ENCODE measurements at regions of chrX and their contacts with region 1.

Region 1: DNA sequence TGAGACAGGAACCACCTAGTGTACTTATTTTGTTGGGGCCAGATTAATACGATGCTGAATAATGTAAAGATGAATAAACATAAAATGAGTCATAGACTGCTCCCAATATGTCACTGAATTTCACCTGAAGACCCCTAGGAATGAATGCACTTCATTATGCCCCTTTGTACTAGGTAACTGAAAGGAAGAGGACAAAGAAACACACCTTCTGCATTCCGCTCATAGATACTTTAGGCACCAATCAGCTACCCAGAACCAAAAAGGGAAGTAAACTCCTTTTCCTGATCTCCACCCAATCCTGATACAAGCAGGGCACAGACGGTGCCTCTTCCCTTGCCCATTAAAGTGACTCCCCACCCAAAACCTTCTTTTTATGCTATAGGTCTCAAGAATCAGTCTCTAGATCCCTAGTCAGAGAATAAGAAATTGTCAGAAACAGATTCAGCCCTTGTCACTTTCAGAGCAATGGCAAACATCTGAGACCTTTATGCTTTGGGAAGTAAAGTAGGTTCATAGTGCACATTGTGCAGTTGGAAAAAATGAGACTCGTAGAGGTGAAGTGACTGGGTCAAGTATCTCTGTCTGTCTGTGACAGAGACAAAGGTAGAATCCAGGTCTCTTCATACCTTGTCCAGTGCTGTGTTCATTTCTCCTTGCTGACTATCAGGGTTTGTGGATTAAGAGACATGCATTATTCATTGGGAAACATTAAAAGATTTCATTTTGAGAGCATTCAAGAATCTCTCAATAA is 2.3 kb downstream of the GPR174 start:
- DNase-seq: peak; percentile 57
- ATAC-seq: peak; percentile 56
- H3K4me3 ChIP-seq: peak overlapping the region; percentile 54 to 85 (median 64)
- H3K4me3 Mint-ChIP-seq: peak overlapping the region; percentile 95
- H3K27ac ChIP-seq: peak overlapping the region; percentile 69 to 78
- H3K27ac Mint-ChIP-seq: peak overlapping the region; percentile 93
- H3K4me1 ChIP-seq: peaks cover 40 to 43% of the 10 kb centered on the region in 2 donors
- H3K4me1 Mint-ChIP-seq: peaks cover 60% of the 10 kb centered on the region
- H3K27me3 ChIP-seq: no peaks in the 10 kb centered on the region
- H3K27me3 Mint-ChIP-seq: no peaks in the 10 kb centered on the region
- CTCF ChIP-seq: no peak

Region 2: GRCh38 chrX:78321809-78322208 is 825.0 kb before region 1 on chrX:
- CTCF ChIA-PET with region 1: no interaction called
- POLR2A ChIA-PET with region 1: no interaction called
- intact Hi-C with region 1: loop called (anchors 10 kb)
- DNase-seq: peak; percentile 81
- ATAC-seq: peak; percentile 97
- H3K4me3 ChIP-seq: peak overlapping the region in 1 of 5 experiments; percentile 38
- H3K4me3 Mint-ChIP-seq: peak overlapping the region; percentile 73
- H3K27ac ChIP-seq: peak overlapping the region in 1 of 2 donors; percentile 74
- H3K27ac Mint-ChIP-seq: peak overlapping the region; percentile 77
- H3K4me1 ChIP-seq: peaks cover 41 to 45% of the 10 kb centered on the region in 2 donors
- H3K4me1 Mint-ChIP-seq: peaks cover 55% of the 10 kb centered on the region
- H3K27me3 ChIP-seq: no peaks in the 10 kb centered on the region
- H3K27me3 Mint-ChIP-seq: no peaks in the 10 kb centered on the region
- CTCF ChIP-seq: no peak

Region 3: GRCh38 chrX:78769946-78770345 is 376.9 kb before region 1 on chrX:
- CTCF ChIA-PET with region 1: no interaction called
- POLR2A ChIA-PET with region 1: no interaction called
- intact Hi-C with region 1: no loop called
- DNase-seq: no peak
- ATAC-seq: no peak
- H3K4me3 ChIP-seq: no peak overlapping the region
- H3K4me3 Mint-ChIP-seq: no peak overlapping the region
- H3K27ac ChIP-seq: no peak overlapping the region
- H3K27ac Mint-ChIP-seq: no peak overlapping the region
- H3K4me1 ChIP-seq: no peaks in the 10 kb centered on the region
- H3K4me1 Mint-ChIP-seq: no peaks in the 10 kb centered on the region
- H3K27me3 ChIP-seq: no peaks in the 10 kb centered on the region
- H3K27me3 Mint-ChIP-seq: no peaks in the 10 kb centered on the region
- CTCF ChIP-seq: no peak

Region 4: GRCh38 chrX:79081895-79082512 is 64.8 kb before region 1 on chrX:
- CTCF ChIA-PET with region 1: interaction called, 5 read pairs
- POLR2A ChIA-PET with region 1: no interaction called
- intact Hi-C with region 1: loop called (anchors 5 kb)
- DNase-seq: peak; percentile 69
- ATAC-seq: peak; percentile 78
- H3K4me3 ChIP-seq: peak overlapping the region in 2 of 5 experiments; percentile 12 to 26
- H3K4me3 Mint-ChIP-seq: peak overlapping the region; percentile 55
- H3K27ac ChIP-seq: peak overlapping the region in 1 of 2 donors; percentile 32
- H3K27ac Mint-ChIP-seq: peak overlapping the region; percentile 51
- H3K4me1 ChIP-seq: peaks cover 4 to 9% of the 10 kb centered on the region in 2 donors
- H3K4me1 Mint-ChIP-seq: peaks cover 10% of the 10 kb centered on the region
- H3K27me3 ChIP-seq: no peaks in the 10 kb centered on the region
- H3K27me3 Mint-ChIP-seq: no peaks in the 10 kb centered on the region
- CTCF ChIP-seq: peak; percentile 70

Region 5: GRCh38 chrX:79161655-79162054 is 14.8 kb after region 1 on chrX:
- CTCF ChIA-PET with region 1: no interaction called
- POLR2A ChIA-PET with region 1: no interaction called
- intact Hi-C with region 1: loop called (anchors 2 kb)
- DNase-seq: peak; percentile 71
- ATAC-seq: peak; percentile 89
- H3K4me3 ChIP-seq: peak overlapping the region in 3 of 5 experiments; percentile 22 to 41 (median 31)
- H3K4me3 Mint-ChIP-seq: peak overlapping the region; percentile 87
- H3K27ac ChIP-seq: peak overlapping the region; percentile 79 to 84
- H3K27ac Mint-ChIP-seq: peak overlapping the region; percentile 89
- H3K4me1 ChIP-seq: peaks cover 39 to 43% of the 10 kb centered on the region in 2 donors
- H3K4me1 Mint-ChIP-seq: peaks cover 64% of the 10 kb centered on the region
- H3K27me3 ChIP-seq: no peaks in the 10 kb centered on the region
- H3K27me3 Mint-ChIP-seq: no peaks in the 10 kb centered on the region
- CTCF ChIP-seq: no peak

Region 6: GRCh38 chrX:79259073-79259689 is 112.4 kb after region 1 on chrX:
- CTCF ChIA-PET with region 1: interaction called, 3 read pairs
- POLR2A ChIA-PET with region 1: no interaction called
- intact Hi-C with region 1: loop called (anchors 5 kb)
- DNase-seq: peak; percentile 82
- ATAC-seq: peak; percentile 89
- H3K4me3 ChIP-seq: peak overlapping the region in 3 of 5 experiments; percentile 19 to 43 (median 26)
- H3K4me3 Mint-ChIP-seq: peak overlapping the region; percentile 77
- H3K27ac ChIP-seq: peak overlapping the region; percentile 51 to 76
- H3K27ac Mint-ChIP-seq: peak overlapping the region; percentile 90
- H3K4me1 ChIP-seq: peaks cover 34 to 42% of the 10 kb centered on the region in 2 donors
- H3K4me1 Mint-ChIP-seq: peaks cover 65% of the 10 kb centered on the region
- H3K27me3 ChIP-seq: no peaks in the 10 kb centered on the region
- H3K27me3 Mint-ChIP-seq: no peaks in the 10 kb centered on the region
- CTCF ChIP-seq: no peak